ENCODE measurements at regions of chr15 and their contacts with region 1.

Region 1: DNA sequence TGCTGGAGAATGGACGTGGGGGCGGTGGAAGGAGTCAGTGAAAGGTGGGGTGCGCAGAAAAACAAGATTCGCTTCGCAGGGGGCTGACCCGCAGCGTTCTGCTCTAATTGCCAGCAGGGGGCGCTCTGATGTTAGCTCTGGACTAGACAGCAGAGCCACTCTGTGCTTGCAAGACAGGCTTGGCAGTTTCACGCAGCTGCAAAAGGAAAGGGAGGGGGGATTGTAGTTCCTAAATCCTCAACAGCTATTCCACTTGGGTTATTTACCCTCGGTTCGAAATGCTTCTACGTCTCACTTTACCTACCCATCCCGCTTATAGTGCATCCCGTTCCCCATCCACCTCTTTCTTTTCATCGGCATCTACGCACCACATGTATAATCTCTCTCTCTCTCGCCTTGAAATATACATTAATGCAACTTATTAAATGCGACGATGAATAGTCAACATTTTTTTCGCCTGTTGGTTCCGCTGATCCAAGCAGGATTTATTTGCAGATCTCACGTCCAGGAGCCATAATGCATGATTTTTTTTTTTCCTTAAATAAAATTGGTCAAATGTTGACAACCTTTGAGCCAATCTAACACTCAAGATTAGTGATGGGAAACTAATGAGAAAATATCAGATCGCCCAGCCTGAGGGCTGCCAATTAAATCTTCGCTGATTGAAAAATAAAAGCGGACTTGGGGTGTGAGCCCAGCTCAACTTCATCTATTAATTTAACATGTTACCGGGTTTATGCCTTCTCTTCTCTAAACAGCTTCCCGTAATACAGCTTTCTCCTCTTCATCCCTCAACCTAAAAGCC is 216.4 kb downstream of the MEIS2 start:
- DNase-seq: peak; percentile 82
- H3K4me3 ChIP-seq: peak overlapping the region in 1 of 4 donors; percentile 26
- H3K27ac ChIP-seq: peak overlapping the region in 3 of 4 donors; percentile 15 to 83 (median 76)
- H3K4me1 ChIP-seq: peaks cover 0 to 16% (median 2%) of the 10 kb centered on the region in 4 donors
- H3K27me3 ChIP-seq: peaks cover 100% of the 10 kb centered on the region
- CTCF ChIP-seq: peak; percentile 75 to 89 (median 82)
- EP300 ChIP-seq: no peak
- POLR2A ChIP-seq: no peak

Region 2: DNA sequence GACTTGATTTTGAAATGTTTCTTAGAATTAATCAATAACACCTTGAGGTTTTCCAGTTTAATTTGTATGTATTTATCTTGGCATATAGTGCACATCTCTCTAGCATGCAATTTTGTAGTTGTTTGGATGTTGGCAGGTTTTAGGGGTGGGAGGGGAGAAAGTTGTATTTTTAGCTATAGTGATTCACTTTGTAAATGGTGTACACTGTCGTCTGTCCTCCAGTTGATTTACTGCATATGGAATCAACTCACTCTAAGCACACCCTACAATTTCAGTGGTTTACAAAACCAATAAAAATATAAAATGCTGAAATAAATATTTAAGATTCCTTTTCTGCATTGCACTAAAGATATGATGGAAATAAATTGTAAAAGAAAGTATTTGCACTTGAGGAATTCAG is 105.4 kb before region 1 on chr15:
- in situ Hi-C with region 1: no loop called
- intact Hi-C with region 1: no loop called
- DNase-seq: no peak
- H3K4me3 ChIP-seq: no peak overlapping the region
- H3K27ac ChIP-seq: no peak overlapping the region
- H3K4me1 ChIP-seq: peaks cover 0 to 16% (median 3%) of the 10 kb centered on the region in 4 donors
- H3K27me3 ChIP-seq: no peaks in the 10 kb centered on the region
- CTCF ChIP-seq: no peak
- EP300 ChIP-seq: no peak
- POLR2A ChIP-seq: no peak

Region 3: GRCh38 chr15:37891766-37892368 is 1008.0 kb after region 1 on chr15:
- in situ Hi-C with region 1: loop called in 2 of 4 experiments (anchors 25 kb)
- intact Hi-C with region 1: no loop called
- DNase-seq: no peak
- H3K4me3 ChIP-seq: no peak overlapping the region
- H3K27ac ChIP-seq: no peak overlapping the region
- H3K4me1 ChIP-seq: no peaks in the 10 kb centered on the region
- H3K27me3 ChIP-seq: no peaks in the 10 kb centered on the region
- CTCF ChIP-seq: peak; percentile 40 to 69 (median 61)
- EP300 ChIP-seq: no peak
- POLR2A ChIP-seq: no peak

Measured in transverse colon (tissue), 4 donors.